GM13977 (cell line): ENCODE measurements at regions of chr5 and their contacts with region 1.

Region 1: GRCh38 chr5:76771705-76772405 is 47.0 kb upstream of the F2RL1 start:
- DNase-seq: no peak
- CTCF ChIP-seq: no peak

Region 2: GRCh38 chr5:76590027-76590426 is 181.8 kb before region 1 on chr5:
- in situ Hi-C with region 1: loop called (anchors 10 kb)
- DNase-seq: peak; percentile 34
- CTCF ChIP-seq: no peak

Region 3: DNA sequence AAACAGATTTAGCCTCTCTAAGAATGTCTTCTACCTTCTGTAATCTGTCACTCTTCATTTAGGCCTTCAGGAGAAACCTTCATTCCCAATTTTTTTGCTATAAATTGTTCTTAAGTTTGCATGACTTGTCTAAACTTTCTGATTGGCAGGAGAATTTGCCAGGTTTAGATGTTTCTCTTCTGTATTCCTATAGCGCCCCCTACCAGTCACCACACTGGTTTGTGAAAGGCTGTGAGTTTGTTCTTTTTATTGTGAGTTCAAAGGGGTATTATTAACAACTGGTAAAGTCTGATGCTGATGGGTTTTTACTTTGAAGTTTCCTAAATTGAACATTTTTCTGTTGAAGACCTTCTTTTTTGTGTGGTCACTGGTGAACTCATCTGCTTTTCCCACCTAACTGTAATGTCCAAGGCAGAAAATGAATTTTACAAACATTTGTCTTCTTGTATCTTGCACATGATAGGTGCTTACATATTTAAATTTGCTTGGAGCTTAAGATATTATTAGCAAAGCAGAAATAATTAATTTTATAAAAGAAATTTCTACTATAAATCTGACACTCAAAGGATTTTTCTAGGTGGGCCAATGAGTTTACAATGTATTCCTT is 130.2 kb before region 1 on chr5:
- in situ Hi-C with region 1: no loop called
- DNase-seq: peak; percentile 39
- CTCF ChIP-seq: peak; percentile 81

Region 4: DNA sequence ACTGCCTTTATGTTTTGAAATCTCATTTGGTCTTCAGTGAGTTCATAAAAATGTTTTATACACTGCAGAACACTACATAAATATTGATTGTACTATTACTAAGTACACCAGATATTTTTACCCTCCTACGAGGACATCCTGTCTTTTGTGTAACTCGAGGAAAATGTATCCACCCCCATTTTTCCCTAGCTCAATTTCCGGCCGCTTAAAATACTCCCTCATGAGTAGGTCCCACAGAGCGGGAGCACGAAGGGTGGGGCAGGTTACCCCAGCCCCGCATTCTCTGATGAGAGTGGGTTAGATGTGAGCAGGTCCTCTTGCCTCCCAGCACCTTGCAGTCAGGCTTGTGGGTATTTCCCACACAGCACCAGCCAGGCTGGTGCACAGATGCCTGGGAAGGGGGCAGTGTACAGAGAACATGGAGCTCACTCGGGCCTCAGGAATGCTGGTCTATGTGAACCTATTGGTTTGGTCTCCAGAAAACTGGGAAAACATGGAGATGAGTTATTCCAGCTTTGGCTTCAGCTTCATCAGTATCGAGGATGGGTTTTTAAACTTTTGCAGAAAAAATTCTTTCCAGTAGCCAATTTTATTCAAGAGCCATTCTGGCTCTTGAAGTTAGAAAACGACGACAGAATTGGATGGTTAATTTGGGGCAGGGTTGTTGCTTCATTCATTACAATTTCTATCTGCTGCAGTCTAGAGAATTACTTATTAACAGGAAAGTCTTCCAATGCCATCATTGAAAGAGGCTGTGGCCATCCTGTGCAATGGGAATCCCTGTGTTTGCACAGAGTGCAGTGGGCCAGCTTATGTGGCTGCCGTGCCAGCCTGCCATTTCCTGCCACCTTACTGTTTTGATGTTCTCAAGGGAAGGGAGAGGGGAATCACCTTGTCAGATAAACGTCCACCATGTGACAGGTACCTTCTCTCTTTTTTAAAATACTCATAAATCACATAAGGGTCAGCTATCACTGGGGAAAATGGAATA is 647.0 kb after region 1 on chr5:
- in situ Hi-C with region 1: no loop called
- DNase-seq: no peak
- CTCF ChIP-seq: no peak